PC-9 (cell line): ENCODE measurements at regions of chr6 and their contacts with region 1.

Region 1: GRCh38 chr6:5367510-5367909 is 106.2 kb downstream of the FARS2 start:
- DNase-seq: no peak
- H3K4me3 ChIP-seq: no peak overlapping the region
- H3K27ac ChIP-seq: no peak overlapping the region
- H3K4me1 ChIP-seq: no peaks in the 10 kb centered on the region
- H3K27me3 ChIP-seq: no peaks in the 10 kb centered on the region
- CTCF ChIP-seq: no peak

Region 2: DNA sequence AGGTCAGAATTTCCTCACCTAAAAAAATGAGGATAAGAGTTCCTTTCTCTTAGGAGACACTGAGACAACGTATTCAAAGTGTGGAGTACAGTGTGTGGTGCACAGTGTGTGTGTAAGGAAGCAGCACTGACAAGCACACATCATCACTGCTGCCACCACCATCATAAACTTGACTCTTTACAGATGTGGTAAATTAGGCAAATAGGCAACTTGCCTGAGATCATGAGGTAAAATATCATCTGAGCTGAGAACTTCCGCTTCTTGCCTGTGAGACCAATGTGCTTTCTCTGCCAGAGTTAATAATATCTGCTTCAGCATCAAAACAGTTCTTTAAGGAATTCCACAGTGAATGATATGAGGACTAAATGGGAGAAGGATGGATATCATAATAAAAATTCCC is 159.5 kb before region 1 on chr6:
- CTCF ChIA-PET with region 1: no interaction called
- POLR2A ChIA-PET with region 1: interaction called, 12 read pairs
- intact Hi-C with region 1: no loop called
- DNase-seq: no peak
- H3K4me3 ChIP-seq: no peak overlapping the region
- H3K27ac ChIP-seq: no peak overlapping the region
- H3K4me1 ChIP-seq: 0 out of 2 replicates have a peak, but pooled peaks cover 7% of the 10 kb centered on the region
- H3K27me3 ChIP-seq: no peaks in the 10 kb centered on the region
- CTCF ChIP-seq: no peak

Region 3: GRCh38 chr6:5343998-5344397 is 23.5 kb before region 1 on chr6:
- CTCF ChIA-PET with region 1: no interaction called
- POLR2A ChIA-PET with region 1: no interaction called
- intact Hi-C with region 1: loop called (anchors 1 kb)
- DNase-seq: no peak
- H3K4me3 ChIP-seq: no peak overlapping the region
- H3K27ac ChIP-seq: no peak overlapping the region
- H3K4me1 ChIP-seq: no peaks in the 10 kb centered on the region
- H3K27me3 ChIP-seq: no peaks in the 10 kb centered on the region
- CTCF ChIP-seq: no peak

Region 4: DNA sequence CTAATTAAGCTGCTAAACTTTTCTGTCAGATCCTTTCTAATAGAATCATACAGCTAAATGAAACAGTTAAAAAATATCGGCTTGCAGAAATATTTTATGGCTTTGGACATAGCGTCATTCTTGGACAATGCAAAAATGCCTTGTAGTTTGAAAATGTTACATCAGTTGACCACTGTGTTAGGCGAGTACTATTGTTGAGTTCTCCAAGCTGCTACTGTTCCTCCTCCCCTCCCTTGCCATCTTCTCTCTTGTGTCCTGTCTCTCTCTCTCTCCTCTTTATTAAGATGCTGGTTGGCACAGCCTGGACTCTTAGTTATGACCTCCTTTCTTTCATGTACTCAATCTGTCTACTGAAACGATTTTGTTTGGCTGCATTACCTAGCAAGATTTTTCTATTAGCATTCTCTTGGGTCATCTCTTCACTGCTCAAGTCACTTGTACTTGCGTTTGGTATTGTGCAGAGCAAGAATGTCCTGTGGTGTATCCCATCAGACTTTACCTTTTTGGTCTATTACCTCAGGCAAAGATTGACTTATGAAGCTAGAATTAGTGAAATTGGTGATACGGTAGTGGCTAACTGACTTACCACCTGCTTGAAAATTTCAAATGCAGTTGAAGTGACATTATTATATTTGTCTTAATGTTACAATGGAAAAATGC is 21.7 kb after region 1 on chr6:
- CTCF ChIA-PET with region 1: no interaction called
- POLR2A ChIA-PET with region 1: no interaction called
- intact Hi-C with region 1: no loop called
- DNase-seq: no peak
- H3K4me3 ChIP-seq: no peak overlapping the region
- H3K27ac ChIP-seq: no peak overlapping the region
- H3K4me1 ChIP-seq: no peaks in the 10 kb centered on the region
- H3K27me3 ChIP-seq: no peaks in the 10 kb centered on the region
- CTCF ChIP-seq: no peak

Region 5: DNA sequence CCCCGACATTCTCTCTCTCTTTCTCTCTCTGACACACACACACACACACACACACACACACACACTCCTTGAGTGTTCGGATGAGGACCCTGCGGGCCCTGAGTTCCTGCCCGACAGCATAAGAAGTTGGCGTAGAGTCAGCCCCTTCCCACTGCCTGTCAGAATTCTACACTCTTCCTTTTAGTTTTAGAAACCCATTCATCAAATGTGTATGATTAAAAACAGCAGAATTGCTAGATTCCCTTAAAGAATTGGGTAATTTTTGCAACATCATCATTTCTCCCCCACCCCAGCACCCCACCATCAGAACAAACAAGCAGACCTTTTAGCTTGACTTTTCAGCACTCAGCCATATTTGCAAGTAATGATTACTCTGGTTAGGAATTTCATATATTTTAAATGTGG is 216.6 kb after region 1 on chr6:
- CTCF ChIA-PET with region 1: no interaction called
- POLR2A ChIA-PET with region 1: no interaction called
- intact Hi-C with region 1: no loop called
- DNase-seq: no peak
- H3K4me3 ChIP-seq: no peak overlapping the region
- H3K27ac ChIP-seq: no peak overlapping the region
- H3K4me1 ChIP-seq: no peaks in the 10 kb centered on the region
- H3K27me3 ChIP-seq: no peaks in the 10 kb centered on the region
- CTCF ChIP-seq: no peak